ENCODE measurements at regions of chr9 and their contacts with region 1.

Region 1: DNA sequence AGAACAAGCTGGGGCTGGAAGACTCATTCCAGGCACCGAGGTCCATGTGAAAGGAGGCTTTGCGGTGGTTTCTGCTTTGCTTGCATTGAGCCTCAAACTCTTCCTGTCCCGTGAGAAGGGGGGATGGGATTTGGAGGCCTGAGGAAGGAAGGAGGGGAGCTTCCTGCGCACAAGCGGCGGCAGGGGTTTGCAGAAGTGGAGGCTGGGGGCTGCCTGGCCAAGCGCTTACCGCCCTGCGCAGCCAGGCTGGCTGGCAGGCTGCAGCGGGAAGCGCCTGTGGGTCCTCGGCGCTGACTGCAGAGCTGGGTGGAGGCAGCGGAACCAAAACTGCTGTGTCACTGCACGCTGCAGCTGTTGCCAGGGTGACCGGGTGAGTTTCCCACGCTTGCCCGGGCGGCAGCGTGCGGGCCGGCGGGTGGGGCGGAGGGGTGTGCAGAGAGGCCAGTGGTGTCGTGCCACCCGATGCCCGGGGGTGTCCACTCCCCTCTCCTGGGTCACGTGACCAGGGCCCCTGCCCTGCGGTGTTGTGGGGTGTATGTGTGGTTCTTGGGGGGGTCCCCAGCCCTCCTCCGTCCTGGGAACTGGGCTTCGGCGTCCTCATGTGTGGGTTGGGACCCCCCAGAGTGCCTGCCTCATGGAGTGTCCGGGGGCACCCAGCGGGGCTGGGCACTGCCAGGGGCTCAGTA is 81.0 kb downstream of the RXRA start:
- DNase-seq: peak; percentile 91
- ATAC-seq: peak; percentile 88
- H3K4me3 ChIP-seq: peak overlapping the region in 4 of 5 experiments; percentile 23 to 49 (median 30)
- H3K4me3 Mint-ChIP-seq: peak overlapping the region; percentile 73
- H3K27ac ChIP-seq: no peak overlapping the region
- H3K27ac Mint-ChIP-seq: peak overlapping the region; percentile 77
- H3K4me1 ChIP-seq: peaks cover 59 to 66% of the 10 kb centered on the region in 2 donors
- H3K4me1 Mint-ChIP-seq: peaks cover 46% of the 10 kb centered on the region
- H3K27me3 ChIP-seq: no peaks in the 10 kb centered on the region
- H3K27me3 Mint-ChIP-seq: no peaks in the 10 kb centered on the region
- CTCF ChIP-seq: no peak

Region 2: DNA sequence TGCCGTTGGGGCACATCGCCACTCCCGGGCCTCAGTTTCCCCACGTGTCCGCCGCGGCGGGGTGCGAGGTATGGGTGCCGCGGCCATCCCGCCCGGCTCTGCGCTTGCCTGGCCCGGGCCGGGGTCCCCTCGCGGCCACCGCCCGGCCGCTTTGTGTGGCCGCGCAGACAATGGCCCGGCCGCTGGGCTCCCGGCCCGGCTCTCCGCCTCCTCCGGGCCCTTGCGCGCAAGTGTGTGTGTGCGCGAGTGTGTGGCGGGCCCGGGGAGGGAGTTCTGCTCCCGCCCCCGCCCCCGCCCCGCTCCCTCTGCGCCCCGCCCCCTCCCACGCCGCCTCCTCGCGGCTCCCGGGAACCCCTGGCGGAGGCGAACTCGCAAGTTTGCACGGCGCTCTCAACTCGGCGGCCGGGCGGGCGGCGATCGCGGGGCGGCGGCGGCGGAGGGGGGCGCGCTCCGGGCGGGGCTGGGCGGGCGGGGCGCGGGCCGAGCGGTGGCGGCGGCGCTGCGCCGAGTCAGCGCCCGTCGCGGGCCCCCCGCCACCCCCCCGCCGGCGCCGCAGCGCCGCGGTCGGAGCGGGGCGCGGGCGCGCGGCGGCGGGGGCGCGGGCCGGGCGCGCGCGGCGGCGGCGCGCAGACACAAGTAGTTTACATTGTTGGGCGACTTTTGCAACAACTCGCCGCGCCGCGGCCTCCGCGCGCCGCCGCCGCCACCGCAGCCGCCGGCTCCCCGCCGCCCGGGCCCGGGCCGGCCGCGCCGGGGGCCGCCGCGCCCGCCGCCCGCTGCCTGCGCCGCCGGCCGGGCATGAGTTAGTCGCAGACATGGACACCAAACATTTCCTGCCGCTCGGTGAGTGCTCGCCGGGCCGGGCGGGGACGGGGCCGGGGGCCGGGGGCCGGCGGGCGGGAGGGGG is 81.2 kb before region 1 on chr9 and contains the start of gene RXRA:
- CTCF ChIA-PET with region 1: interaction called, 3 read pairs
- POLR2A ChIA-PET with region 1: no interaction called
- intact Hi-C with region 1: loop called (anchors 5 kb)
- DNase-seq: peak; percentile 83
- ATAC-seq: peak; percentile 77
- H3K4me3 ChIP-seq: peak within 1 kb of the TSS; percentile 17 to 85 (median 78)
- H3K4me3 Mint-ChIP-seq: peak within 1 kb of the TSS; percentile 82
- H3K27ac ChIP-seq: no peak within 1 kb of the TSS
- H3K27ac Mint-ChIP-seq: peak within 1 kb of the TSS; percentile 68
- H3K4me1 ChIP-seq: peaks cover 11 to 20% of the 10 kb centered on the region in 2 donors
- H3K4me1 Mint-ChIP-seq: peaks cover 17% of the 10 kb centered on the region
- H3K27me3 ChIP-seq: peaks cover 0 to 13% (median 3%) of the 10 kb centered on the region in 4 experiments
- H3K27me3 Mint-ChIP-seq: no peaks in the 10 kb centered on the region
- CTCF ChIP-seq: no peak
- total RNA-seq, gene RXRA: 6.7 and 6.8 TPM in 2 replicates

Region 3: GRCh38 chr9:134525841-134526595 is 118.8 kb after region 1 on chr9:
- CTCF ChIA-PET with region 1: no interaction called
- POLR2A ChIA-PET with region 1: no interaction called
- intact Hi-C with region 1: no loop called
- DNase-seq: no peak
- ATAC-seq: no peak
- H3K4me3 ChIP-seq: no peak overlapping the region
- H3K4me3 Mint-ChIP-seq: no peak overlapping the region
- H3K27ac ChIP-seq: no peak overlapping the region
- H3K27ac Mint-ChIP-seq: no peak overlapping the region
- H3K4me1 ChIP-seq: no peaks in the 10 kb centered on the region
- H3K4me1 Mint-ChIP-seq: no peaks in the 10 kb centered on the region
- H3K27me3 ChIP-seq: peaks cover 0 to 2% (median 0%) of the 10 kb centered on the region in 4 experiments
- H3K27me3 Mint-ChIP-seq: peaks cover 9% of the 10 kb centered on the region
- CTCF ChIP-seq: no peak

Measured in B cell (primary cell).